ENCODE measurements at regions of chr13 and their contacts with region 1.

Region 1: GRCh38 chr13:47076500-47076899 is 179.6 kb upstream of the HTR2A start:
- DNase-seq: no peak
- ATAC-seq: no peak
- H3K4me3 Mint-ChIP-seq: no peak overlapping the region
- H3K27ac Mint-ChIP-seq: no peak overlapping the region
- H3K4me1 Mint-ChIP-seq: no peaks in the 10 kb centered on the region
- H3K27me3 Mint-ChIP-seq: peaks cover 2% of the 10 kb centered on the region

Region 2: DNA sequence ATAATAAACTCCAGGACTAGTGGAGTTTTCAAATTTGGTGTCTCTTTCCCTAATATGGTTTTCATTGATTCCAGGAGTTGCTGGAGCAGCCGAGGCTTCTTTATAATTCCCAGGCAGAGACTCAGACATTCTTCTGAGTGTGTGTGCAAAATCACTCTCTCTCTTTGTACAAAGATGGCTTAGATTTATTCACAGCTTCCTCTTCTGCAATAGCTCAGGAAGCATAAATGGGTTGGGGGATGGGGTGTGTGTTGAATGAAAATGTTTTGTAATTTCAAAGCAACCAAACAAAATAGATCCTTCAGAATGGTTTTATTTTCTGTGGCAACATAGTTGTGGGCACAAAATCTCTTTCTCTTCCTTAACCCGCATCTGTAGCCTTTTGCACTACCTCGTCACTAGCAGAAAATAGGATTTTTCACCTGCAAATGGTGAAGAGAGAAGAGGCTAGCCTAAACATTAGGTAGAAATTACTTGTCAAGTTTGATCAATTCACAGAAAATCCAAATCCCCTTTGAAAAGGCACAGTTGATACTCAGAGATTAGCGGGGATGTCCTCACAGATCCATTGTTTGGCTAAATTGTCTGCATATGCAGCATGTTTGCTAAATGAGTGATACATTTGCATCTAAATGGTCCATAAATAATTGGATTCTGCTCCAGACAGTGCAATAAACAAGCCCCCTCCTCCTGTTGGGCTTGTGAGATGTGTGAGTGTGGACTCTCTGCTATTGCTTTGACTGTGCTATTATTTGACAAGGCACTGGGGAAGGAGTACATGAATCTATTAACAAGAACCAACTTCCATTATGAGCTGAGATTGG is 1307.6 kb before region 1 on chr13:
- CTCF ChIA-PET with region 1: no interaction called
- POLR2A ChIA-PET with region 1: no interaction called
- intact Hi-C with region 1: loop called in 1 of 2 experiments (anchors 10 kb)
- DNase-seq: no peak
- ATAC-seq: no peak
- H3K4me3 Mint-ChIP-seq: no peak overlapping the region
- H3K27ac Mint-ChIP-seq: no peak overlapping the region
- H3K4me1 Mint-ChIP-seq: peaks cover 8% of the 10 kb centered on the region
- H3K27me3 Mint-ChIP-seq: no peaks in the 10 kb centered on the region

Region 3: GRCh38 chr13:46992383-46992952 is 84.0 kb before region 1 on chr13:
- CTCF ChIA-PET with region 1: no interaction called
- POLR2A ChIA-PET with region 1: no interaction called
- intact Hi-C with region 1: no loop called
- DNase-seq: peak; percentile 10
- ATAC-seq: no peak
- H3K4me3 Mint-ChIP-seq: no peak overlapping the region
- H3K27ac Mint-ChIP-seq: no peak overlapping the region
- H3K4me1 Mint-ChIP-seq: no peaks in the 10 kb centered on the region
- H3K27me3 Mint-ChIP-seq: peaks cover 8% of the 10 kb centered on the region